ENCODE measurements at regions of chr2 and their contacts with region 1.

Region 1: DNA sequence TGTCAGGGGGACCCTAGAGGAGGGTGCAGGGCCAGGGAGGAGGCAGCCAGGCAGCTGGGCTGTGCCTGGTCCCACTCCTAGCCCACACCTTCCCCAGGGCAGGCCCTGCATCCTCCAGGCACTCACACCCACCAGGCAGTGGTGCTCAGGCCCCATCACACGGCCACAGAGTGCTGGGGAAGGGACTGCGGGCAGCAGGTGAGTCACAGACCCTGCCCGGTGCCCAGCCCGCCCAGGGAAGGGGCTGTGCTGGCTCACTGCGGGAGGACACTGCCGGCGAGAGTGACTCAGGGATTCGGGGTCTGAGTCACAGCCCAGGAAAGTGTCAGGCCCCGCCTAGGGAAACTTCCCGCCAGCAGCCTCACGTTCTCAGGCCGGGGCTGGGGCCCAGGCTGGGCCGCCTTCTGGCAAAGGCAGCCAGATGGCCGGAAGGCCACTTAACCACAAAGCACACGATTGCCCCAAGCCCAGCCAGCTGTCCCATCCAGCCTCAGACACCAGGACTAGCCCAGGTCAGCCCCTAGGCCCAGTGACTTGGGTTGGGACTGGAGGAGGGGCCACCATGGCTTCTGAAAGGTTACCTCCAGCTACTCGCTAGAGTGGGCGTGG is 42.2 kb downstream of the BIN1 start:
- DNase-seq: peak in 7 of 9 experiments; percentile 39 to 70 (median 48)
- ATAC-seq: peak; percentile 57
- H3K4me3 ChIP-seq: no peak overlapping the region
- H3K4me3 Mint-ChIP-seq: no peak overlapping the region
- H3K27ac ChIP-seq: peak overlapping the region in 1 of 2 experiments; percentile 65
- H3K27ac Mint-ChIP-seq: peak overlapping the region; percentile 37
- H3K4me1 ChIP-seq: peaks cover 7% of the 10 kb centered on the region
- H3K4me1 Mint-ChIP-seq: peaks cover 18% of the 10 kb centered on the region
- H3K27me3 ChIP-seq: no peaks in the 10 kb centered on the region
- H3K27me3 Mint-ChIP-seq: no peaks in the 10 kb centered on the region
- CTCF ChIP-seq: no peak

Region 2: GRCh38 chr2:127081826-127082633 is 17.3 kb after region 1 on chr2:
- CTCF ChIA-PET with region 1: interaction called, 61 read pairs
- POLR2A ChIA-PET with region 1: interaction called, 8 read pairs
- intact Hi-C with region 1: loop called in 1 of 2 experiments (anchors 1 kb)
- DNase-seq: peak; percentile 67 to 94 (median 82)
- ATAC-seq: peak; percentile 66
- H3K4me3 ChIP-seq: peak overlapping the region; percentile 84 to 94
- H3K4me3 Mint-ChIP-seq: peak overlapping the region; percentile 90
- H3K27ac ChIP-seq: peak overlapping the region; percentile 94 to 96
- H3K27ac Mint-ChIP-seq: peak overlapping the region; percentile 99
- H3K4me1 ChIP-seq: peaks cover 94% of the 10 kb centered on the region
- H3K4me1 Mint-ChIP-seq: peaks cover 85% of the 10 kb centered on the region
- H3K27me3 ChIP-seq: no peaks in the 10 kb centered on the region
- H3K27me3 Mint-ChIP-seq: no peaks in the 10 kb centered on the region
- CTCF ChIP-seq: no peak

Region 3: DNA sequence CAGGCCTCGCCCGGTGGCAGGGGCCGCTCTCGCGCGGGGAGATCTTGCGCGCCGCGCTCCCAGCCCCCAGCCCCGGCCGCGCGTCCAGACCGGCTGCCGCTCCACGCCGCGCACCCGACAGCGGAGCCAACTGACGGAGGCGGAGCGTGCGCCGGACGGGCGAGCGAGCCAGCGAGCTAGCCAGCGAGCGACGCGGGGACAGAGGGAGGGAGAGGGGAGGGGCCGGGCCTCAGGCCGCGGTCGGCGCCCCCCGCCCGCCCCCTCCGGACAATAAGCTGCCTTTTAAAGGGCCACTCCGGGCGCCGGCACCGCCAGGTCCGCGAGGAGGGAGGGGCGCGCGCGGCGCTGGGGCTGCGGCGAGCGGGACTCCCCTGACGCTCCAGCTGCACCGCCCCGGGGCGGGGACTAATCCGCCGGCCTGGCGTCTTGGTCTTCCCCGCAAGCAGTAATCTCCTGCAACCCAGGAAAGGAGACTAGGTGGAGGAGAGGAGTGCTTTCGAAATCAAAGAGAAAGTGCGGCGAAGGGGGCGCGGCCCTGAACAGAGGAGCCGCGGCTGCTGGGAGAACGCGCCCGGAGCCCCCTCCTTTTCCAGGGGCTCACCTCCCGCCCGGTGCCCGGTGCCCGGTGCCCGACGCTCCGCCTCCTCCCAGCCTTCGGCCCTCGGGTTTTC is 42.3 kb after region 1 on chr2 and contains the start of gene BIN1:
- CTCF ChIA-PET with region 1: interaction called, 20 read pairs
- POLR2A ChIA-PET with region 1: interaction called, 3 read pairs
- intact Hi-C with region 1: loop called (anchors 1 kb)
- DNase-seq: peak; percentile 35 to 90 (median 69)
- ATAC-seq: peak; percentile 86
- H3K4me3 ChIP-seq: peak within 1 kb of the TSS; percentile 65 to 77
- H3K4me3 Mint-ChIP-seq: peak within 1 kb of the TSS; percentile 87
- H3K27ac ChIP-seq: peak within 1 kb of the TSS in 1 of 2 experiments; percentile 0
- H3K27ac Mint-ChIP-seq: peak within 1 kb of the TSS; percentile 12
- H3K4me1 ChIP-seq: peaks cover 6% of the 10 kb centered on the region
- H3K4me1 Mint-ChIP-seq: peaks cover 6% of the 10 kb centered on the region
- H3K27me3 ChIP-seq: peaks cover 4 to 14% of the 10 kb centered on the region in 2 experiments
- H3K27me3 Mint-ChIP-seq: peaks cover 12% of the 10 kb centered on the region
- CTCF ChIP-seq: no peak
- total RNA-seq, gene BIN1: 92.1 to 92.4 TPM

Region 4: DNA sequence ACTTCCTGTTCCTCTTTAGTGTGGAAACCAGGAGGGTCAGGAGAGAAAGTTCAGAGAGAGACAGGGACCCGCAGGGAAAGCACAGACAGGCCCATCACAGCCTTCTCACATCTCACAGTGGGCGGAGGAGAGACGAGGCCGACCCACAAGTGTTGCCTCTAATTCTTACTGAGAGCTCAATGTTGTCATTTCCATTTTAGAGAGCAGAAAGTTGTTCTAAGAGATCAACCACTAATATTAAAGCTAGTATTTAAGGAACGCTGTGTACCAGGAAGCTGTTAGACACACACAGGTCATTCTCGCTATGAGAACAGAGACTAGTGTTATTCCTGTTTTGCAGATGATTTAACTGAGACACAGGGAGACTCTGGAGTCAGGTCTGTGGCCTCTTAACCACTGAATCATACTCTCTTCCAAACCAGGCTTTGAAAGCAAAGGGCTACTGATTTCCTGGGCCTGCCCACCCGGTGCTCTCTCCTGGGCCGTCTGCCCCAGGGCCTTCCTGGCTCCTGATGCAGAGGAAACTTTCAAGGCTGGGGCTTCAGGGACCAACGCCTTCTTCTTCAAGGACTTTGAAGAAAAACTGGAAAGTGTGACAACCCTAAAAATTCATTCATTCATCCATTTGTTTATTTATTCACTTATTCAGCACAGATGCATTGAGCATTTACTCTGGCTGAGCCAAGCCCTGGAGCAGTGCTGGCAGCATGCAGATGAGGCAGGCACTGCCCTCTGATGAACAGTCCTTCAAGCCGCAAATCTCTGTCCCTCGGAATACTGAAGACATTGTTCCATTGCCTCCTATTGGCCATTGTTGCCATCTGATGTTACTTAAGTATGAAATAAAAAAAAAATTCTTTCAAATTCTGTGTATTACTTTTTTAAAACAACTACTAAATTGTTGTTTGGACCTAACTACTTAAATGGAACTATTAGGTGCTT is 79.4 kb after region 1 on chr2:
- CTCF ChIA-PET with region 1: interaction called, 5 read pairs
- POLR2A ChIA-PET with region 1: no interaction called
- intact Hi-C with region 1: loop called in 1 of 2 experiments (anchors 5 kb)
- DNase-seq: peak in 1 of 9 experiments; percentile 31
- ATAC-seq: no peak
- H3K4me3 ChIP-seq: no peak overlapping the region
- H3K4me3 Mint-ChIP-seq: no peak overlapping the region
- H3K27ac ChIP-seq: no peak overlapping the region
- H3K27ac Mint-ChIP-seq: no peak overlapping the region
- H3K4me1 ChIP-seq: no peaks in the 10 kb centered on the region
- H3K4me1 Mint-ChIP-seq: peaks cover 3% of the 10 kb centered on the region
- H3K27me3 ChIP-seq: no peaks in the 10 kb centered on the region
- H3K27me3 Mint-ChIP-seq: no peaks in the 10 kb centered on the region
- CTCF ChIP-seq: no peak

Region 5: GRCh38 chr2:127293748-127294562 is 229.2 kb after region 1 on chr2 and contains the start of gene ERCC3:
- CTCF ChIA-PET with region 1: no interaction called
- POLR2A ChIA-PET with region 1: no interaction called
- intact Hi-C with region 1: loop called in 1 of 2 experiments (anchors 10 kb)
- DNase-seq: peak; percentile 56 to 90 (median 83)
- ATAC-seq: peak; percentile 91
- H3K4me3 ChIP-seq: peak within 1 kb of the TSS; percentile 75 to 91
- H3K4me3 Mint-ChIP-seq: peak within 1 kb of the TSS; percentile 94
- H3K27ac ChIP-seq: peak within 1 kb of the TSS; percentile 74 to 76
- H3K27ac Mint-ChIP-seq: peak within 1 kb of the TSS; percentile 91
- H3K4me1 ChIP-seq: peaks cover 13% of the 10 kb centered on the region
- H3K4me1 Mint-ChIP-seq: peaks cover 45% of the 10 kb centered on the region
- H3K27me3 ChIP-seq: no peaks in the 10 kb centered on the region
- H3K27me3 Mint-ChIP-seq: no peaks in the 10 kb centered on the region
- CTCF ChIP-seq: no peak
- total RNA-seq, gene ERCC3: 43.2 to 46.4 TPM

Measured in CD8-positive, alpha-beta T cell (primary cell).